ENCODE measurements at regions of chr16 and their contacts with region 1.

Region 1: GRCh38 chr16:30657866-30658730 is at the start of gene FBRS:
- DNase-seq: peak; percentile 100
- ATAC-seq: peak; percentile 79
- H3K4me3 Mint-ChIP-seq: peak within 1 kb of the TSS; percentile 89
- H3K27ac Mint-ChIP-seq: peak within 1 kb of the TSS; percentile 99
- H3K4me1 Mint-ChIP-seq: peaks cover 41% of the 10 kb centered on the region
- H3K27me3 Mint-ChIP-seq: no peaks in the 10 kb centered on the region
- total RNA-seq, gene FBRS: 84.7 to 111 TPM

Region 2: GRCh38 chr16:28823872-28824716 is 1834.0 kb before region 1 on chr16:
- CTCF ChIA-PET with region 1: no interaction called
- POLR2A ChIA-PET with region 1: no interaction called
- intact Hi-C with region 1: loop called in 1 of 2 experiments (anchors 2 kb)
- DNase-seq: peak; percentile 98
- ATAC-seq: peak; percentile 80
- H3K4me3 Mint-ChIP-seq: peak overlapping the region; percentile 96
- H3K27ac Mint-ChIP-seq: peak overlapping the region; percentile 100
- H3K4me1 Mint-ChIP-seq: peaks cover 45% of the 10 kb centered on the region
- H3K27me3 Mint-ChIP-seq: no peaks in the 10 kb centered on the region

Region 3: DNA sequence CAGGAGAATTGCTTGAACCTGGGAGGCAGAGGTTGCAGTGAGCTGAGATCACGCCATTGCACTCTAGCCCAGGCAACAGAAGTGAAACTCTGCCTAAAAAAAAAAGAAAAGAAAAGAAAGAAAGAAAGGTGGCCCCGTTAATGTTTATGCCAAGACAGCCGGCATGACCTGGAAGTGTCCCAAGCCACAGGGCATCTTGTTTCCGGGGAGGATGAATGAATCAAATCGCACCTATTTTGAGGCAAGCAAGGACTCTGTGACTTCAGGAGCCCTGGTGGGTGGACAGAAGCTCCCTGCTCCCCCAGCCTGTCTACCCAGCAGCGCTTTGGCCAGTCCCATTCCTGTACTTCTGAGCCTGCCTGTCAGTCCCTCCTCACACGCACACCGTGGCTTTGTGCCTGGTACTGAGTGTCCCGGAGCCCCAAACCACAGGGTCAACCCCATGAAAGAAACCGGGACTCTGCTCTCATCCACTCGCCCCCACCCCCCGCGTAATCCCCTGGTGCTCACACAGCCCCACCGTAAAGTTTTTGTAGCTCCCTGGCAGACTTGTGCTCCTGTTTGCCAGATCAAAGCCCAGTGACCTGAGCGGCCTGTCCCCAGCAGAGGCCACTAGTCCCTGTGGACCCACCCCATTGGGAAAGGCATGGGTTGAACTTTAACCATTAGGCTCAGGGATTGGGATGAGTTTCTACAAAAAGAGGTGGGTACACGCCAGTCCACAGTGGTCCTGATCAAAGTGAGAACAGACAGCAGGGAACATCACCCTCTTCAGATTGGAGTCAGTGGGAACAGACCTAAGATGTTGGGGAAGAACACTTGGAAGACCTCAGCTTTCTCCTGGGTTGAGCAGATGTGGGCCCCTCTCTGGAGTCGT is 322.3 kb before region 1 on chr16:
- CTCF ChIA-PET with region 1: no interaction called
- POLR2A ChIA-PET with region 1: no interaction called
- intact Hi-C with region 1: loop called in 1 of 2 experiments (anchors 1 kb)
- DNase-seq: peak; percentile 55
- ATAC-seq: peak; percentile 13
- H3K4me3 Mint-ChIP-seq: peak overlapping the region; percentile 87
- H3K27ac Mint-ChIP-seq: peak overlapping the region; percentile 73
- H3K4me1 Mint-ChIP-seq: peaks cover 22% of the 10 kb centered on the region
- H3K27me3 Mint-ChIP-seq: no peaks in the 10 kb centered on the region

Region 4: GRCh38 chr16:30526823-30527635 is 131.1 kb before region 1 on chr16:
- CTCF ChIA-PET with region 1: no interaction called
- POLR2A ChIA-PET with region 1: no interaction called
- intact Hi-C with region 1: loop called in 1 of 2 experiments (anchors 1 kb)
- DNase-seq: peak; percentile 98
- ATAC-seq: peak; percentile 93
- H3K4me3 Mint-ChIP-seq: peak overlapping the region; percentile 55
- H3K27ac Mint-ChIP-seq: peak overlapping the region; percentile 62
- H3K4me1 Mint-ChIP-seq: peaks cover 37% of the 10 kb centered on the region
- H3K27me3 Mint-ChIP-seq: no peaks in the 10 kb centered on the region

Region 5: DNA sequence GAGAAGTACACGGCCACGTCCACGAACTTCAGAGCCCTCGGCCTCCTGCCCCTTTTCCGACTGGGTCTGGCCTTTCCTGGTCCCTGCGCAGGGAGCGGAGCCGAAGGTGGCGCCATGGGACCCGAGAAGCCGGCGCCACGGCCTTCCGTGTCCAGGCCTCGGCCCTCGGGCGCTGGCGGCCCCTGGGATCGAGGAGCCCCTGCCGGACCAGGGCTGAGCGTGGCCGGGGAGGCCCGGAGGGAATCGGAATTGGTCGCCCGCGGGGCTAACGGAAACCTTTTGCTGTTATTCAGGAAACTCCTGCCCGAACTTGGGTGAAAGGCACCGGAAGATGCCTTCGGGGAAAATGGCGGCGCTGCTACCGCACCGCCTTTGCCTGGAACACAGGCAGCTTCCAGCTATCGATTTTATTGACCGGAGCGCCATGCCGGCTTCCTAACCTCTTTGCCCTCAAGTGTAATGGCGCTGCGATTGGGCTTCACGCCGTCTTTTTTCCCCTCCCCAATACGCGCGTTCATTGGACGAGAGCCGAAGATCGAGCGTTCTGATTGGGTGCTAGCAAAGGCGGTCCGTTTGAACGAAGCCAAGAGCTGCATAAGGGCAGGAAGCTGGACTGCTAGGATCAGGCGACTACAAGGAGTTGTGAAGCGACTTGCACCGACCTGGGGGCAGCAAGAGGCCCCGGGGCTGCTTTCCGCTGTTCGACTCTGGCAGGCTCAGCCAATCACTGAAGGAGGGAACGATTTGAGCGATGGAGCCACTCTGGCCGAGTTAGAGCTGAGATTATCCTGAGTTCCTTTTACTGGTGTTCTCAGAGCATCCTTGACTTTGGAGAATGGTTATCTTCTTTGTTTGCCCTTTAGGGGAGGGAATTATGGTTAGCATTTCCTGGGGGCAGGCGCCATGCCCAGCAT is 47.9 kb before region 1 on chr16 and contains the start of gene ZNF689:
- CTCF ChIA-PET with region 1: interaction called, 6 read pairs
- POLR2A ChIA-PET with region 1: interaction called, 9 read pairs
- intact Hi-C with region 1: loop called in 1 of 2 experiments (anchors 1 kb)
- DNase-seq: peak; percentile 96
- ATAC-seq: peak; percentile 88
- H3K4me3 Mint-ChIP-seq: peak within 1 kb of the TSS; percentile 80
- H3K27ac Mint-ChIP-seq: peak within 1 kb of the TSS; percentile 96
- H3K4me1 Mint-ChIP-seq: peaks cover 19% of the 10 kb centered on the region
- H3K27me3 Mint-ChIP-seq: no peaks in the 10 kb centered on the region
- total RNA-seq, gene ZNF689: 9.0 to 10.7 TPM

Region 6: DNA sequence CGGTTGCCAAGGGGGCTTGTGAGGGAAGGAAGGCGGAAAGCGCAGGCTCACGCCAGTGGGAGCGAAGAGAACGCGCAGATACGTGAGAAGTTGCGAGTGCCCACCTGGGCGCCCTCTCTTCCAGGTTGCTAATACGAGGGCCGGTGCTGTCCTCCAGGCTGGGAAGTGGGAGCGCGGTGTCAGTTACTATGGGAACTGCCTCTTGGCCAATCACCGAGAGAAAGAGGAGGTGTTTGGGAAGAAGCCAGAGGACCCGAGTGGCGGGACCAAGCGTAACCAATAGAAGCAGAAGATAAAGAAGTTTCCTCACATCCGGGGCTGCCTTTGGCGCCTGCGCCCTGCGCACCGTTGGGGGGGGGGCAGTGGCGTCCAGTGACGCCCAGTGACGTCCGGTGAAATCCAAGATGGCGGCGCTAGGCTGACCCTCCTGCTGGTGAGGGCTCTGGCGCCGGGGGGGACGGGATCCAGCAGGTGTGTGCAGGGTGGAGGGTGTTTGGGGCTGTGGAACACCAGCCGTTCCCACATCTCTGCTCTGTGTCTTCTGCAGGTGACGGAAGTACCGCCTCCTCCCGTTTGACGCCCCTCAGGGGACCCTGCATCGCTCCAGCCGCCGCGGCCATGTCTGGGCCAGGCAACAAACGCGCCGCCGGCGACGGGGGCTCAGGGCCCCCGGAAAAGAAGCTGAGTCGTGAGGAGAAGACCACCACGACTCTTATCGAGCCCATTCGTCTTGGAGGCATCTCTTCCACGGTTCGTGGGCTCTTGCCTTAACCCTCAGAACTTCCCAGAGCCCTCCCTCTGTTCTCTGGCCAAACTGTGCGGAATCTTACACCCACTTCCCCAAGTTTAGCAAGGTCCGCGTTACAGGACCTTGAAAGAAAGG is 104.1 kb after region 1 on chr16 and contains the starts of genes CFAP119 and RNF40:
- CTCF ChIA-PET with region 1: no interaction called
- POLR2A ChIA-PET with region 1: interaction called, 4 read pairs
- intact Hi-C with region 1: loop called in 1 of 2 experiments (anchors 1 kb)
- DNase-seq: peak; percentile 94
- ATAC-seq: peak; percentile 98
- H3K4me3 Mint-ChIP-seq: peak within 1 kb of the TSS; percentile 90
- H3K27ac Mint-ChIP-seq: peak within 1 kb of the TSS; percentile 83
- H3K4me1 Mint-ChIP-seq: peaks cover 25% of the 10 kb centered on the region
- H3K27me3 Mint-ChIP-seq: no peaks in the 10 kb centered on the region
- total RNA-seq, gene CFAP119: 1.7 to 3.1 TPM
- total RNA-seq, gene RNF40: 72.3 to 85.5 TPM

Region 7: DNA sequence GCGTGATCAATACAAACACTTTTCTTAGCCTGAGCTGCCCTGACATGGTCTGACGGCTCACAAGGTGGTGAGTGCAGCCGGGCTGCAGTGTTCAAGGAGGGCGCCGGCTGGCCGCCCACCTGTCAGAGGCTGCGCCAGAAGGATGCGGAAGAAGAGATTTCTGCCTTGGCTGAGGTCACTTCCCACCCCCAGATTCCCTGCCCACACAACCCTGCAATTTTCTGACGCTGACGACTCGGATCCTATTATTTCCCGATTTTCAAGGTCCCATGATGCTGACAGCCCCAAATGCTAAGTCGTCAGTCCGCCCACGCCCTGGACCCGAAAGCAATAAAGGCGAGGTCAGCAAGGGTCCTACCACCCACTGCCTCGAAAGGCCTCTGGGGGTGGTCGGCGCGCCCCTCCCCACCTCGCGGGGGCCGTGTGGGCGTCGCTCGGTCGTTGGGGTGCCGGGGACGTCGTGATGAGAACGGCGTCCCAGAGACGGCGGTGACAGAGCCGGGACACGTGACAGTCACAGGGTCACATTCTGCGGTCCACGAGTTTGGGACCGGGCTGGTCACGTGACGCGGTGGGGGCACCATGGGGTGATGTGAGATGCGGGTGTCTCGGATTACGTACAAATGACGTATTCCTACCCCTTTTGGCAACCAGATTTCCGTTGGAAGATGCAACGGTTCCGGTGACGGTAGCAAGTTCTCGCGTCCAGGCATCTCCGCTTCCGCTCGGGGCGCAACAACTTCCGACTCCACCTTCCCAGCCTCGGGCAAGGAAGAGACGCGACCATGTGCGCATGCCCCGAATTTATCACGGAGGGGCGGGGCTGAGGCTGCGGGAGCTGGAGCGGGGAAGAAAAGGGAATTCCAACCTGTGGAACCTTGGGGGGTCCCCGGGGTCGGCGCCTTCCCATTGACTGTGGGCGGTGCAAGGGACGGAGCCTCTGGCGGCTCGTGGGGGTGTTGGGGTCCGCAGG is 374.9 kb after region 1 on chr16 and contains the start of gene STX4:
- CTCF ChIA-PET with region 1: no interaction called
- POLR2A ChIA-PET with region 1: no interaction called
- intact Hi-C with region 1: loop called in 1 of 2 experiments (anchors 1 kb)
- DNase-seq: peak; percentile 99
- ATAC-seq: peak; percentile 89
- H3K4me3 Mint-ChIP-seq: peak within 1 kb of the TSS; percentile 96
- H3K27ac Mint-ChIP-seq: peak within 1 kb of the TSS; percentile 93
- H3K4me1 Mint-ChIP-seq: peaks cover 15% of the 10 kb centered on the region
- H3K27me3 Mint-ChIP-seq: no peaks in the 10 kb centered on the region
- total RNA-seq, gene STX4: 29.2 to 35.9 TPM

Measured in activated CD4-positive, alpha-beta T cell treated with anti-CD3 and anti-CD28 coated beads for 36 hours (primary cell).